OCI-LY7 (cell line): ENCODE measurements at regions of chr1 and their contacts with region 1.

Region 1: DNA sequence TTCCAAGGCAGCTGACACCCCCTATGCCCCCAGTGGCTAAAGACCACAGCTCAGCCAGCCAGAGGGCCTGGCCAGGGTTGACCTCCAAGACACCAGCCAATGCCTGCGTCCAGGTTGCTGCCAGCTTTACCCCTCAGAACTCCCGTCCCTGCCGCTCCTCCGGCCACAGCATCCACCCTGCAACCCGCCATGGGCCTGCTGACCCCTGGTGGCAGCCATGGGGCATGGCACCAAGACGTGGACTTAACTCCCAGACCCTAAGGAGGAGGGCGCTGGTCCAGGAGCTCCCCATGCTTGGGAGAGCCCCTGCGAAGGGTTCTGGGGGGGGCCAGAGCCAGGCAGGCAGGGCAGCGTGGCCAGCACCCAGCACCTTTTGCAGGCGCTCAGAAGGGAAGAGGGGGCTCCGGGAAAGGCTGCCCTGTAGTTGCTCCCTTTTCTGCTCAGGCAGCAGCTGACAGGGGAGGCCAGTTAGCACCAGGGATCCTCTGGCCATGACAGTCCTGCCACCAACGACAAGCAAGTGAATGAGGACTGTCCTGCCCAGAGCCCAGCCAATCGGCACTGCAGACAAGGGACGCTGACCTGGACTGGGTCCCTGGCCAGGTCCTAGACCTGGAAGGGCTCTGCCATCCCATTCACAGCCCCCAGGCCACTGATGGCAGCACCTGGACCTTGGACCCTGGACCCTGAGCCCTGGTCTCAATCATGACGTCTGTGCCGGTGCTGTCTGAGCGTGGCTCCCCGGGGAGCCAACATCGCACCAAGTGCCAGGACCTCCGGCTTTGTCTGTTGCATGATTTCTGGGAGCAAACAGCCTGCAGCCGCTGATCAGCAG is 246.2 kb downstream of the NPHP4 start:
- DNase-seq: peak; percentile 58
- H3K4me3 ChIP-seq: no peak overlapping the region
- H3K27ac ChIP-seq: no peak overlapping the region
- H3K4me1 ChIP-seq: no peaks in the 10 kb centered on the region
- CTCF ChIP-seq: peak; percentile 83

Region 2: DNA sequence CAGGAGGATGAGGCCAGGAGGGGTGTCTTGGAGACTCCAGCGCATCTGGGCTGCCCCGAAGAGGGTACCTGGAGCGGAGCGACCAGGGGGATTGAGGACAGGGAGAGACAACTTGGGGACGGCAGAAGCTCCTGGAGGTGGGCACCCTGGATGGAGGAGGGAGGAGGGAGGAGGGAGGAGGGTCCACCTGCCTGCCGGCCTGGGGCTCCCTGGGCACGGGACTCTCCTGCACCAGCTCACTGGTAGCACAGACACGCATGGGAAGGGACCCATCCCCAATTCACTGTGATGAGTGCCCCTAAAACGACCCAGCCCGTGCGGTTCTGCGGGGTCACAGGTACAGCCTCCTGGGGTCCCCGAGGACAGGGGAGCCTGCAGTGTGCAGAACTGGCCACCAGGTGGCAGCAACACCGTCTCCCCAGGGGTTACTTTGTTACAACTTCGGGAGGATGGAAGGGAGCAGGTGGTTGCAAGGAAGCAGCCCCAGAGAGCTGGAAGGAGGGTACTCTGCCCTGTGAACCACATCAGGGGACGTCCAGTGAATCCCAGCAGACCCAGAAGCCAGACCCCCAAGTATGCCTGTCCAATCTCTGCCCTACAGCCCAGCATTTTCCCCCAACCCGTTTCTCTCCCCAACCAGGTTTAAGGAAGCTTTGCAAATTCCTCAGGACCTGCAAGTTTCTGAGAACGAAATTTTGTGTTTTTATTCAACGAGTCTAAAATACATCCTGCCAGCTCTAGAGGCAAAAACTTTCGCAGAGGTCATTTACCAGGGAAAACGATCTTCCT is 236.1 kb before region 1 on chr1:
- CTCF ChIA-PET with region 1: interaction called, 5 read pairs
- POLR2A ChIA-PET with region 1: no interaction called
- intact Hi-C with region 1: loop called (anchors 2 kb)
- DNase-seq: peak; percentile 58
- H3K4me3 ChIP-seq: no peak overlapping the region
- H3K27ac ChIP-seq: no peak overlapping the region
- H3K4me1 ChIP-seq: no peaks in the 10 kb centered on the region
- CTCF ChIP-seq: peak; percentile 91

Region 3: DNA sequence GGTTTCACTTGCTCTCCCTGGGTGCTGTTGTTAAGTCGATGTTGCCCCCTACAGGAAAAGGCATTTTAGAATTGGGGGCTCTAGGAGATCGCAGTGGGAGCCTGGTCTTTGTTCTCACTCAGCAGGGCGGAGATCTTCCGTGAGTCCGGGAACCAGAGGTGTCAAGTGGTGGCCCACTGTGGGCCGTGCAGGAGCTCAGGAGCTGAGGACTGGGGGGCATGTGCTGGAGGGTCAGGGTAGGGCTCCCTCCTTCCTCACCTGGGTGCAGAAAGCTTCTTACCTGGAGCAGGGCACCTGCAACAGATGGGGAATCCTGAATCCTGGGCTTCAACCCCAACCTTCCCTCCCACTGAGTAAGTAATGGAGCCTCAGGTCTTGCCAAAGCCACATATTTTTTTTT is 146.5 kb before region 1 on chr1:
- CTCF ChIA-PET with region 1: no interaction called
- POLR2A ChIA-PET with region 1: no interaction called
- intact Hi-C with region 1: no loop called
- DNase-seq: no peak
- H3K4me3 ChIP-seq: no peak overlapping the region
- H3K27ac ChIP-seq: no peak overlapping the region
- H3K4me1 ChIP-seq: no peaks in the 10 kb centered on the region
- CTCF ChIP-seq: no peak

Region 4: DNA sequence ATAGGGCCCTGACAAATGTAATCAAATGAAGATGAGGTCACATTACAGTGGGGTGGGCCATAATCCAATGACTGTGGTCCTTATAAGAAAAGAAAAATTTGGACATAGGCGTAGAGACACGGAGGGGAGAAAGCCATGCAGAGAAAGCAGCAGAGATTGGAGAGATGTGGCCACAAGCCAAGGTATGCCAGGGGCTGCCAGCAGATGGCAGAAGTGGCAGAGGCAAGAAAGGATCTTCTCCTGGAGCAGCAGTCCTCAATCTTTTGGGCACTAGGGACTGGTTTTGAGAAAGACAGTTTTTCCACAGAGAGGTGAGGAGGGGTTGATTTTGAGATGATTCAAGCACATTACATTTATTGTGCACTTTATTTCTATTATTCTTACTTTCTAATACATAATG is 108.8 kb before region 1 on chr1:
- CTCF ChIA-PET with region 1: no interaction called
- POLR2A ChIA-PET with region 1: no interaction called
- intact Hi-C with region 1: loop called (anchors 1 kb)
- DNase-seq: peak; percentile 8
- H3K4me3 ChIP-seq: no peak overlapping the region
- H3K27ac ChIP-seq: no peak overlapping the region
- H3K4me1 ChIP-seq: no peaks in the 10 kb centered on the region
- CTCF ChIP-seq: peak; percentile 66

Region 5: GRCh38 chr1:5707566-5708340 is 38.2 kb before region 1 on chr1:
- CTCF ChIA-PET with region 1: no interaction called
- POLR2A ChIA-PET with region 1: no interaction called
- intact Hi-C with region 1: no loop called
- DNase-seq: no peak
- H3K4me3 ChIP-seq: no peak overlapping the region
- H3K27ac ChIP-seq: no peak overlapping the region
- H3K4me1 ChIP-seq: no peaks in the 10 kb centered on the region
- CTCF ChIP-seq: no peak

Region 6: DNA sequence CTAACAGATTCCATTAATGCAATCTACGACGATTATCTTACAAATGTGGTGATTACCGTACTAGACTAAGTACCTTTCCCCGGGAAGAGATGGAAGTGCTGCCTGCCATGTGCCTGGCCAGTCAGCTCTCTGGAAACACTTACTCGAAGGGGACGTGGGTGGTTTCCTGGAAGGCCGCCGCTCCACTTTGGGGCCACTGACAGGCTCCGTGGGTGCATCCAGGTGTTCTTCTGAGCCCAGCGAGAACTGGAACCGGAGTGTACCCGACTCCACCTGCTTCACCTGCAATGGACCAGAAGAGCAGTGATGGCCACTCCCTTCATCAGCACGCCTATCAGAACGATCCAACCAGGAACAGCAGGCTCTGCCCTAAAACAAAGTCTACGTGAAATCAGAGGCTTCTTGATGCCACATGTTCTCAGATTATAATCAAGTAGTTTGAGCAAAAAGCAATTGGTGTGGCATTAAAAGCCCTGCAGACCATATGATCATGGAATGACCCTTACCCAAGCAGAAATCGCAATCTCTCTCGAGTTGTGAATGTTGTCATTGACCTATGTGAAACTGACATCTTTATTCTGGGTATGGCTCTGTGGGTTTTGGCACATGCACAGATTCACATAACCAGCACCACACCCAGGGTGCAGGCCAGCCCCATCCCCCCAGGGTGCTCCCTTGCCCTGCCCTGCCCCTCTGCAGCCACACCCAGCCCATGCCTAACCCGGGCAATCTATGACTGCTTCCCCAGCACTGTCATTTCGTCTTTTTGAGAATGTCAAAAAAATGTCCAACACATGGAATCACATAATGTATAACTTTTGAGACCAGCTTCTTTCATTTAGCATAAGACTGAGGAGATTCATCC is 181.7 kb after region 1 on chr1:
- CTCF ChIA-PET with region 1: no interaction called
- POLR2A ChIA-PET with region 1: no interaction called
- intact Hi-C with region 1: no loop called
- DNase-seq: no peak
- H3K4me3 ChIP-seq: no peak overlapping the region
- H3K27ac ChIP-seq: no peak overlapping the region
- H3K4me1 ChIP-seq: no peaks in the 10 kb centered on the region
- CTCF ChIP-seq: no peak